Activated T-helper 1 cell treated with anti-CD3 and anti-CD28 coated beads, Interleukin-12 subunit alpha, Interleukin-12 subunit beta, Interleukin-2, Interleukin-4 antibody, amounts not matched to agents 30 ng/mL and 10 ng/mL and 1 ng/mL, durations not matched to agents 14 hours and 24 hours and 36 hours (primary cell): ENCODE measurements at regions of chr11 and their contacts with region 1.

Region 1: DNA sequence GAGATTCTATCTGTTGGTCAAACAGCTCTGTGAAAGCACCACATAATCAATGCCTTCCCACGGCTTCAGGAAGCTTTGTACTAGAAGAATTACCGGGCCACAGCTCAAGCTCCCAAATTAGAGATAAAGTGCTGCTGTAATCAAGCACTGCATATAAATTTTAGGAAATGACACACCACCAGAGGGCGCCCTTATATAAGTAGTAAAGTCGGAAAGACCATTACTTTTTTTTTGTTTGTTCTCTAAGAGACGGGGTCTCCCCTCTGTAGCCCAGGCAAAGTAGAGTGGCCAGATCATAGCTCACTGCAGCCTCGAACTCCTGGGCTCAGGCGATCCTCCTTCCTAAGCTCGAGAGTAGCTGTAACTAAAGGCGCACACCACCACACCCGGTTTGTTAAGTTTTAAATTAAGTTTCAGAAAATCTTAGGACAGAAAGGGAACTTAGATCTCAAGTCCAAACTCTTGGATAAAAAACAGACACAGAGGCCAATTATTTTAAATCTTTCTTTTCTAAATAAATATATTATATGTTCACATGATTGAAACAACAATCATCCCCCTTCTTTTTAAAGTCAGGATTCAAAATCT is 32.6 kb downstream of the PRCP start:
- DNase-seq: peak; percentile 54
- H3K4me3 Mint-ChIP-seq: no peak overlapping the region
- H3K27ac Mint-ChIP-seq: no peak overlapping the region
- H3K4me1 Mint-ChIP-seq: peaks cover 14% of the 10 kb centered on the region
- H3K27me3 Mint-ChIP-seq: peaks cover 6% of the 10 kb centered on the region

Region 2: DNA sequence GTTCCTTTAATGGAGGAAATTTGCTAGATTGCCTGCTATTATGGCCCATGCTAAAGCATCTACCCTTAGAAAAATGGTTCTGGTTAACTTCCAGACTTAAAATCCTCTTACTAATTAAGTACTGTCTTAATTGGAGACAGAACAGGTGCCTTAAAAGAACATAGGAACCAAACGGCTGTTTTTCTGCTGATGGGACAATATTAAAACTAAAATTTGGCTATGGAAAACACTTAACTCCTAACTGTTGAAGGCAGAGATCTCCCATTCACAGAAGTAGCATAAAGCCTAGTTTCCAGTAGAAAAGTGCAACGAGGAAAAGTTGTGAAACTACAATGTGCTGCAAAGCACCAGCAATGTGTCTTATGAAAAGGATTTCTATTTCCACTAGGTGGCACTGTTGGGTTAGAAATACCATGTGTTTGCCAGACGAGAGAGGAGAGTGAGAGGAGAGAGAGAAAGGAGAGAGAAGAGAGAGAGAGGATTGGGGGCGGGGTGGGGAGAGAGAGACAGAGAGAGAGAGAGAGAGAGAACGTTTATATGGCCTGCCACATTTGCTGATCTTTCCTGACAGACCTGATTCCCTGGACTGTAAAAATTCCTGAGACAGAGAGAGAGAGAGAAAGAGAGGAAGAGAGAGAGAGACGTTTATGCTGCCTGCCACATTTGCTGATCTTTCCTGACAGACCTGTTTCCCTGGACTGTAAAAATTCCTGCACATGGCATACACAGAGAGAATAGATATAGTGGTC is 185.4 kb before region 1 on chr11:
- intact Hi-C with region 1: loop called (anchors 1 kb)
- DNase-seq: no peak
- H3K4me3 Mint-ChIP-seq: no peak overlapping the region
- H3K27ac Mint-ChIP-seq: no peak overlapping the region
- H3K4me1 Mint-ChIP-seq: no peaks in the 10 kb centered on the region
- H3K27me3 Mint-ChIP-seq: peaks cover 4% of the 10 kb centered on the region

Region 3: DNA sequence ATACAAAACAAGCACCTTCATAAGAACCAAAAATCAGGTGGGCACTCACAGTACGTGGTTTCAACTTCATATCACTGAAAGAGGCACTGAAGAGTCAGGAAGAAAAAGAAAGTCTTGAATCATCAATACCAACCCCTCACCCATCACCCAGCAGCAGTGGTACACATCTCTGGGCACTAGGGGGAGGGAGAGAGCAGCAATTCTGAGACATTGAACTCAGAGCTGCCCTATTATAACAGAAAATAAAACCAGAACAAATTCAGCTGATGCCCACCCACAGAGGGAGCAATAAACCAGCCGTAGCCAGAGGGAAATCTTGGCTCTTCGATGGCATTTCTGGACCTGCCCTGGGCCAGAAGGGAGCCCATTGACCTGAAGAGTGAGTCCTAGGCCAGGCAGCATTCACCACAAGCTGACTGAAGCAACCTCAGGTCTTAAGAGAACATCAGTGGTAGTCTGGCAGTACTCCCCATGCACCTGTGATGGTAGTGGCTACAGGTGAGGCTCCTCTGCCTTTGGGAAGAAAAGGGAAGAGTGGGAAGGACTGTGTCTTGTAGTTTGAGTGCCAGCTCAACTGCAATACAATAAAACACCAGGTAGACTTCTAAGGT is 91.7 kb before region 1 on chr11:
- intact Hi-C with region 1: loop called (anchors 5 kb)
- DNase-seq: peak; percentile 21
- H3K4me3 Mint-ChIP-seq: no peak overlapping the region
- H3K27ac Mint-ChIP-seq: no peak overlapping the region
- H3K4me1 Mint-ChIP-seq: peaks cover 4% of the 10 kb centered on the region
- H3K27me3 Mint-ChIP-seq: peaks cover 24% of the 10 kb centered on the region

Region 4: GRCh38 chr11:82811369-82811768 is 56.2 kb before region 1 on chr11:
- intact Hi-C with region 1: no loop called
- DNase-seq: no peak
- H3K4me3 Mint-ChIP-seq: no peak overlapping the region
- H3K27ac Mint-ChIP-seq: no peak overlapping the region
- H3K4me1 Mint-ChIP-seq: no peaks in the 10 kb centered on the region
- H3K27me3 Mint-ChIP-seq: peaks cover 17% of the 10 kb centered on the region

Region 5: GRCh38 chr11:82927254-82927880 is 59.8 kb after region 1 on chr11:
- intact Hi-C with region 1: loop called (anchors 1 kb)
- DNase-seq: no peak
- H3K4me3 Mint-ChIP-seq: no peak overlapping the region
- H3K27ac Mint-ChIP-seq: no peak overlapping the region
- H3K4me1 Mint-ChIP-seq: peaks cover 19% of the 10 kb centered on the region
- H3K27me3 Mint-ChIP-seq: no peaks in the 10 kb centered on the region

Region 6: DNA sequence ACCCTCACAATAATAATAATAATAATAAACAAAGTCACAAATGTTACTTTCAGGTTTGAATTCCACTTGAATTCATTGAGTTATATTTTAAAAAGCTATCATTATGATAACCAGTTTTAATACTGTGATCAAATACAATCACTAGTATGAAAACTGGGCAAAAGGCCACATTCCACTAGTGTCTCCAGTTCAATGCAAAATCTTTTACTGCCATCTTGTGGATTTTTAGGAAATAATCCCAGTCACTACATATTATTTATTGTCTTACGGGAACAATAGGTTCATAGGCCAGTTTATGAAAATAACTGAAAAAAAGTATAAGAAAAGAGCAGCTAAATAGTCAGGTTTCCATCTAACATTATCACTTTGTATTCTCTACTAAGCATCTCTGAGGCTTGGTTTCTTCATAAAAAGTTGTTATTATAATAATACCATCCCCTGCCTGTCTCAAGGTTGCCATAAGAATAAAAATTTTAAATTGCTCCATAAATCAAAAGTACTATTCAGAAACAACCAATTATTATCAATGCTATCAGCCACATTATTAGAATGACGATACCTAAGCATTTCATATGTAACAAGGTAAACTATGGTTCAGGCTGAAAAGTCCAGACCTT is 952.5 kb after region 1 on chr11:
- intact Hi-C with region 1: loop called (anchors 1 kb)
- DNase-seq: no peak
- H3K4me3 Mint-ChIP-seq: no peak overlapping the region
- H3K27ac Mint-ChIP-seq: no peak overlapping the region
- H3K4me1 Mint-ChIP-seq: no peaks in the 10 kb centered on the region
- H3K27me3 Mint-ChIP-seq: peaks cover 2% of the 10 kb centered on the region